MCF 10A (cell line): ENCODE measurements at regions of chr4 and their contacts with region 1.

Region 1: GRCh38 chr4:113958766-113959538 is 20.5 kb downstream of the ARSJ start:
- DNase-seq: peak; percentile 89
- H3K4me3 Mint-ChIP-seq: peak overlapping the region; percentile 44
- H3K27ac Mint-ChIP-seq: peak overlapping the region; percentile 90
- H3K4me1 Mint-ChIP-seq: peaks cover 67% of the 10 kb centered on the region
- H3K27me3 Mint-ChIP-seq: no peaks in the 10 kb centered on the region
- CTCF ChIP-seq: no peak

Region 2: DNA sequence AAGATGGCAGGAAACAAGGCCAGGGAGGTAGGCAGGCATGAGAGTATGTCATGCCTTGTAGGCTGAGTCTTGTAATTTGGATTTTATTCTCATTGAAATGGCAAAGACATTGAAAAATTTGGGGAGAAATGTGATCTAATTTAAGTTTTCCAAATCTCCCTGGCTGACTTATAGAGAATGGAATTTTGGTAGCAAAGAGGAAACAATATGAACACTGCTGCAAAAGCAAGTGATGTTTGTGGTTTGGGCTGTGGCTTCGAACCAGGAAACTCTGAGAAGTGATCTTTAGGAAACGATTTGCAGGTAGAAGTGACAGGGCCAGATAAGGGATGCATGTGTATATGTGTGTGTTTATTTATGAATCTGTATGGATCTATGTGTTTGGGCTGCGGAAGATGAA is 15.1 kb before region 1 on chr4:
- CTCF ChIA-PET with region 1: interaction called, 5 read pairs
- POLR2A ChIA-PET with region 1: interaction called, 11 read pairs
- intact Hi-C with region 1: no loop called
- DNase-seq: no peak
- H3K4me3 Mint-ChIP-seq: no peak overlapping the region
- H3K27ac Mint-ChIP-seq: no peak overlapping the region
- H3K4me1 Mint-ChIP-seq: peaks cover 30% of the 10 kb centered on the region
- H3K27me3 Mint-ChIP-seq: no peaks in the 10 kb centered on the region
- CTCF ChIP-seq: no peak

Region 3: GRCh38 chr4:113971706-113972360 is 12.9 kb after region 1 on chr4:
- CTCF ChIA-PET with region 1: interaction called, 3 read pairs
- POLR2A ChIA-PET with region 1: interaction called, 125 read pairs
- intact Hi-C with region 1: no loop called
- DNase-seq: no peak
- H3K4me3 Mint-ChIP-seq: no peak overlapping the region
- H3K27ac Mint-ChIP-seq: no peak overlapping the region
- H3K4me1 Mint-ChIP-seq: peaks cover 28% of the 10 kb centered on the region
- H3K27me3 Mint-ChIP-seq: no peaks in the 10 kb centered on the region
- CTCF ChIP-seq: no peak

Region 4: GRCh38 chr4:114015444-114015899 is 56.5 kb after region 1 on chr4:
- CTCF ChIA-PET with region 1: interaction called, 3 read pairs
- POLR2A ChIA-PET with region 1: interaction called, 11 read pairs
- intact Hi-C with region 1: loop called (anchors 1 kb)
- DNase-seq: peak; percentile 98
- H3K4me3 Mint-ChIP-seq: peak overlapping the region; percentile 35
- H3K27ac Mint-ChIP-seq: peak overlapping the region; percentile 87
- H3K4me1 Mint-ChIP-seq: peaks cover 28% of the 10 kb centered on the region
- H3K27me3 Mint-ChIP-seq: no peaks in the 10 kb centered on the region
- CTCF ChIP-seq: no peak

Region 5: GRCh38 chr4:114076899-114077570 is 118.1 kb after region 1 on chr4:
- CTCF ChIA-PET with region 1: interaction called, 14 read pairs
- POLR2A ChIA-PET with region 1: no interaction called
- intact Hi-C with region 1: no loop called
- DNase-seq: peak; percentile 22
- H3K4me3 Mint-ChIP-seq: no peak overlapping the region
- H3K27ac Mint-ChIP-seq: peak overlapping the region; percentile 23
- H3K4me1 Mint-ChIP-seq: peaks cover 9% of the 10 kb centered on the region
- H3K27me3 Mint-ChIP-seq: no peaks in the 10 kb centered on the region
- CTCF ChIP-seq: no peak

Region 6: DNA sequence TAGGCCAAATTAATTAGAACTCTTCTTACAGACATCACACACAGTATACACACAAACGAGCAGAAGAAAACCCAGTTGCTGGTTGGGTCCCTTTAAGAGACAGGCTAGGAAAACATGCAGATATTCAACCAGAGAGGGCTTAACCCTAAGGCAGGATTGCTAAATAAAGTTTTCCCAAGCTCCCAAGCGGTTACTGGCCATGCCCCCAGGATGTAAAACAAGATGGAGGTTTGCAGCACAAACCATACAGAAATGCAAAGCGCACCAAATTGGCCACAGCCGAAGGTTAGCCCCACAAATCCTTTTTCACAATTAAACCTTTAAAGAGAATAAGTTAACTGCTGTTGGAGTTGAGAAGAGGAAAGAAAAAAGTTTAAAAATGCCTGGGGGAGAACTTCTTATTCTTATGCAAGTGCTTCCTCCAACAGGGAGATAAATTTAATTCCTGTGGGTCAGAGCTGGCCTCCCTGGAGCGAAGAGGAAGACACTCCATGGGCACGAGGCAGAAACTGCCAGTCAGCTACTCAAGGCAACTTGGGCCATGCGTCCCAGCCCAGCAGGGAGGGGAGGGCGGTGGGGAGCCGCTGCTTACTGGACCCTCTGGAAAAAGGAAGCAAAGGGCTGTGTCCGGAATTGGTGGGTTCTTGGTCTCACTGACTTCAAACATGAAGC is 188.1 kb after region 1 on chr4:
- CTCF ChIA-PET with region 1: no interaction called
- POLR2A ChIA-PET with region 1: no interaction called
- intact Hi-C with region 1: no loop called
- DNase-seq: no peak
- H3K4me3 Mint-ChIP-seq: no peak overlapping the region
- H3K27ac Mint-ChIP-seq: no peak overlapping the region
- H3K4me1 Mint-ChIP-seq: no peaks in the 10 kb centered on the region
- H3K27me3 Mint-ChIP-seq: no peaks in the 10 kb centered on the region
- CTCF ChIP-seq: no peak